Activated B cell treated with CpG ODN at 0.5 μM for 24 hours (primary cell): ENCODE measurements at regions of chr2 and their contacts with region 1.

Region 1: DNA sequence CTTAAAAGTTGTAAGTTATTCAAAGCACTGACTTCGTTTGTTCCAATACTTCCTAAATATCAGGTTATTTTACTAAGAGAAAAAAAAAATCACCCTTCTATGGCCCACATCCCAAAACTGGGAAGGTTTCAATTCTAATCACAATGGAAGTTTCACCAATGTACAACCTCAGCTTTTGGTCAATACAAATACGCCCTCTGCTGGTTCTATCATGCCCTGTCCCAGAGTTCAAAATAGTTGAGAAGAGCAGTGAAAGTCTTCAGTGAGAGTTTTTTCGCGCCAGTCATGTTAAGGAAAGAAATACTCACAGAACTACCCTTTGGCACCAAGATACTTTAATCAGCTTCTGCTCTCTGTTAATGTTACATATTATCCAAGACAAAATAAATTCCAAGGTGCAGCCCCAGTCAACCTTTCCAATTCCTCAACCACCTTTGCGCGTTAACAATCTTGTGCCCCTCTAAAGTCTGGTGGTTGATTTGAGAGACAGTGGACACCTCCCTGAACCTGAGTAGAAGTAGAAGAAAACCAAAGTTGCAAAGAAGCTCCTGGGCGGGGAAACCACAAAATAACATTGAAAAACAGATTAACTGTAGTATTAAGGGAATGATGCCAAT is 59.9 kb downstream of the SUMO1 start:
- DNase-seq: no peak
- ATAC-seq: peak; percentile 66
- H3K4me3 Mint-ChIP-seq: no peak overlapping the region
- H3K27ac Mint-ChIP-seq: no peak overlapping the region
- H3K4me1 Mint-ChIP-seq: no peaks in the 10 kb centered on the region
- H3K27me3 Mint-ChIP-seq: peaks cover 8% of the 10 kb centered on the region
- CTCF ChIP-seq: peak; percentile 57

Region 2: DNA sequence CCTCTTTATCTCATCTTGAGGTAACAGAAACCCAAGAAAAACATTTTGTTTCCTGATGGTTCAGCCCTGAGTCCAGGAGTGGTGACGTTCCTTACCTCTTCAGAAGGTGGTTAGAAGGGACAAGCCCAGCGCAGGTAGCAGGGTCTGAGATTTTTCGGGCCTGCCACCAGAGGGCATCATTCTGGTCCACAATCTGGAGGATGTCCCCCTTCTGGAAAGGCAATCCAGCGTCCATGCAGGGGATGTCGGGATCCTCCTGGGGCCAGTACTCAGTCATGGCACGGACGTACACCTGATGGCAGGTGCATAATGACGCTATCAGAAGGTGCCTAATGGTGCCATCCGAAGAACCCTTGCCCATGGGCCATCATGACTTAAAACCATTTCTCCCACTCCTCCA is 497.7 kb before region 1 on chr2:
- CTCF ChIA-PET with region 1: no interaction called
- POLR2A ChIA-PET with region 1: no interaction called
- intact Hi-C with region 1: loop called (anchors 5 kb)
- DNase-seq: no peak
- ATAC-seq: no peak
- H3K4me3 Mint-ChIP-seq: no peak overlapping the region
- H3K27ac Mint-ChIP-seq: no peak overlapping the region
- H3K4me1 Mint-ChIP-seq: no peaks in the 10 kb centered on the region
- H3K27me3 Mint-ChIP-seq: peaks cover 11% of the 10 kb centered on the region
- CTCF ChIP-seq: no peak

Region 3: DNA sequence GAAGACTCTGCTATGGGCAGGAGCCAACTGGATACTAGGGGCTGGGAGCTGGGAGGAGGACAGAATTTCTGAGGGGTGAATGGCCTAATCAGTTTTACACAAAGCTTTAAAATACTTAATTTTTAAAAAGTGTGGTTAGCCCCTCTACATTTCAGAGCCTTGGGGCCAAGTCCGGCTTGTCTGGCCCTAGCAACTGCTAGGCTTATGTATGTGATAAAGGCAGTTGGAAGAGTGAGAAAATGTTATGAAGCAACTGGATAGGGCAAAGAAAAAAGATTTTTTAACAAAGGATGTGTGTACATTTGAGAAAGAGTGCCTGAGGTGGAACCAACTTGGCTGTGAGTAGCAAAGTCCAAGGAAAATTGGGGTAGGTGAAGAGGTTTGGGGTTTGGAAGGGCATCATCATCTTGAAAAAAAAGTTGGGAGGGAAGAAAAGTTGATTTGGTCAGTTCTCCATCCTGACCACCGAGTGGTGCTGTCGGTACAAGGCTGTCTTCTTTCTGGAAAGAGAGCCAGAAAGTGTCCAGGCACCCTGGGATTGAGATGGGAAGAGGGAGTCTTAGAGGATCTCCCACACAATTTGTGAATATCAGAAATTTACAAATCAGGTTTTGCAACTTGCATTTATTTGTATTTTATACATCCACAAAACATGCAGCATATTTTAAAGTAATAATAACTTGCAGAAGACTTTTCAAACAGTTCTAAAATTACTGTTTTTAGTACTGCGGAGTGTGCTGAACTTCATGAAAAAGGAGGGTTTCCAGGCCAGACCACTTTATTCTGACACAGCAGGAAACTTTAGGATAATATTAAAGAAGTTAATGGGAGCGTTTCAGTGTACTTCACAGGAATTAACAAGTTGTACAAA is 382.6 kb before region 1 on chr2:
- CTCF ChIA-PET with region 1: no interaction called
- POLR2A ChIA-PET with region 1: no interaction called
- intact Hi-C with region 1: loop called (anchors 1 kb)
- DNase-seq: no peak
- ATAC-seq: no peak
- H3K4me3 Mint-ChIP-seq: no peak overlapping the region
- H3K27ac Mint-ChIP-seq: no peak overlapping the region
- H3K4me1 Mint-ChIP-seq: no peaks in the 10 kb centered on the region
- H3K27me3 Mint-ChIP-seq: peaks cover 10% of the 10 kb centered on the region
- CTCF ChIP-seq: no peak

Region 4: GRCh38 chr2:201915446-201915845 is 263.0 kb before region 1 on chr2:
- CTCF ChIA-PET with region 1: no interaction called
- POLR2A ChIA-PET with region 1: no interaction called
- intact Hi-C with region 1: no loop called
- DNase-seq: no peak
- ATAC-seq: peak; percentile 65
- H3K4me3 Mint-ChIP-seq: no peak overlapping the region
- H3K27ac Mint-ChIP-seq: no peak overlapping the region
- H3K4me1 Mint-ChIP-seq: no peaks in the 10 kb centered on the region
- H3K27me3 Mint-ChIP-seq: no peaks in the 10 kb centered on the region
- CTCF ChIP-seq: no peak

Region 5: DNA sequence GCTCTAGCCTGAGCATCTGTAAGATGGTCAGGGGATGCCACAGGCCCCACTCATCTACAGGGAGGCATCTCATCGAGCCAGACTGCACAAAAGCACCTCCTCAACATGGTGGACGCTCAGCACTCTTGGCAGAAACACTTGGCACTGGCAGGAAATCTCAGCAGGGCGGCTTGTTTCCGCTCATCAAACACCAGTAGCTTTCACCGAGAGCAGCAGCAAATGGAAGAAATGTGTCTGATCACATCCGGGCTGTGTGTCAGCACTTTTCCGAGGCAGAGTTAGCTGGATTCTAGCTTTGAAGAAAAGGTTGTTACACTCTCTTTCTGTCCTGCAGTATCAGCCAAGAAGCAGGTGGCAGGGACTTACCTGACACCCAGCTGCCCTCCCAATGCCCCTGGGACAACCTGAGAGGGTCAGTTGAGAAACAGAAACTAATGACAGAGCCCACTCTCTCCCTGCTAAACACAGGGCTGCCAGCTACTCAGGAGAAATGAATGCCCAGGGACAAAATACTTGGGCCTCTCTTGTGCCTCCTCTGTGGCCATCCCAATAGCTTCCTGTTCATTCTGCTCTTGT is 213.7 kb before region 1 on chr2:
- CTCF ChIA-PET with region 1: no interaction called
- POLR2A ChIA-PET with region 1: no interaction called
- intact Hi-C with region 1: loop called (anchors 2 kb)
- DNase-seq: no peak
- ATAC-seq: no peak
- H3K4me3 Mint-ChIP-seq: no peak overlapping the region
- H3K27ac Mint-ChIP-seq: no peak overlapping the region
- H3K4me1 Mint-ChIP-seq: peaks cover 14% of the 10 kb centered on the region
- H3K27me3 Mint-ChIP-seq: peaks cover 5% of the 10 kb centered on the region
- CTCF ChIP-seq: no peak

Region 6: GRCh38 chr2:202249521-202249850 is 71.0 kb after region 1 on chr2:
- CTCF ChIA-PET with region 1: no interaction called
- POLR2A ChIA-PET with region 1: no interaction called
- intact Hi-C with region 1: no loop called
- DNase-seq: no peak
- ATAC-seq: no peak
- H3K4me3 Mint-ChIP-seq: no peak overlapping the region
- H3K27ac Mint-ChIP-seq: no peak overlapping the region
- H3K4me1 Mint-ChIP-seq: no peaks in the 10 kb centered on the region
- H3K27me3 Mint-ChIP-seq: peaks cover 11% of the 10 kb centered on the region
- CTCF ChIP-seq: no peak